ENCODE measurements at regions of chr12 and their contacts with region 1.

Region 1: GRCh38 chr12:114684098-114684869 is at the start of gene TBX3:
- DNase-seq: peak; percentile 97
- H3K4me3 ChIP-seq: peak within 1 kb of the TSS; percentile 52 to 60 (median 55)
- H3K27ac ChIP-seq: peak within 1 kb of the TSS; percentile 78 to 89 (median 84)
- H3K4me1 ChIP-seq: peaks cover 0 to 28% (median 21%) of the 10 kb centered on the region in 4 donors
- H3K27me3 ChIP-seq: peaks cover 22 to 46% (median 31%) of the 10 kb centered on the region in 3 donors
- CTCF ChIP-seq: peak in 3 of 4 experiments; percentile 12 to 53 (median 49)
- EP300 ChIP-seq: no peak
- POLR2A ChIP-seq: peak; percentile 69 to 82
- total RNA-seq, gene TBX3: 6.2 to 9.7 (median 7.6) TPM

Region 2: DNA sequence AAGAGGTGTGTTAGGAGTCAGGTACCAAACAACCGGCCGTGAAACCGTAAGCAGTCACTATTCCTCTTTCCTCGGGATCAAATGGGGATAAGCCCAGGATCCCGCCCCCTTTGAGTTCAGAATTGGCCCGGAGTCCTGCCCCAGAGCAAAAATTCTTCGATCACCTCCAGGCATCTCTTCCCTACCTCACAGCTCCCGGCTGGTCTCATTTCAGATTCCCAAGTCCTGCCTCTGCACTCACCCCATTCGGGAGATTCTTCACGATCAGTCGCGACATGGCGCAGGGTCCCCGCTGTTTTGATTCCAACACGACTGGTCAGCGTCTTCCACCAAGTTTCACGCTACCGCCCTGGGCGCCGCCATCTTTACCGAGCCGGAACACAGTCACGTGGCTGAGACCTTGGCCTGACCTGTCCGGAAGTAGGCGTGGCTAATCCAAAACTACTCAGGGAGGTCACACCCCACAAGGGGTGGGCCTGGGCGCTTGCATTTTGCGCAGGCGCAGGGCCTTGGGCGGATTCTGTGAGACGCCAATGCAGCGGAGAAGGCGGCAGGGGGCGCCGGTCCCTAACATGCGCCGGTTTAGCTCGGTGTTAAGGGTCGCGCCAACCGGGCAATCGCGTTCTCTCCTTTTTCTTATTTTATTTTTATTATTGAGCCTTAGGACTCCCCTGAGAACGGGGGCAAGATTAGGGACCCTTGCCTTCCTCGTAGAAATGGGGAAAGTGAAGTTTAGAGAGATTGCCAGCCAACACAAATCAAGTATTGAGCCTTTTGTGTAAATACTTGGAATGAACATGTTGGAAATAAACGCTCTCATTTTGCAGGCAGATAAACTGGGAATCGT is 718.1 kb before region 1 on chr12 and contains the start of gene RBM19:
- intact Hi-C with region 1: loop called (anchors 5 kb)
- DNase-seq: peak; percentile 98
- H3K4me3 ChIP-seq: peak within 1 kb of the TSS; percentile 65 to 78 (median 70)
- H3K27ac ChIP-seq: peak within 1 kb of the TSS; percentile 30 to 68 (median 56)
- H3K4me1 ChIP-seq: peaks cover 0 to 15% (median 13%) of the 10 kb centered on the region in 4 donors
- H3K27me3 ChIP-seq: no peaks in the 10 kb centered on the region
- CTCF ChIP-seq: peak; percentile 76 to 89 (median 78)
- EP300 ChIP-seq: no peak
- POLR2A ChIP-seq: no peak
- total RNA-seq, gene RBM19: 22.2 to 42.7 (median 26.2) TPM

Region 3: GRCh38 chr12:114744691-114745090 is 60.4 kb after region 1 on chr12:
- intact Hi-C with region 1: loop called (anchors 5 kb)
- DNase-seq: peak; percentile 77
- H3K4me3 ChIP-seq: peak overlapping the region in 2 of 4 donors; percentile 11 to 16
- H3K27ac ChIP-seq: peak overlapping the region in 2 of 4 donors; percentile 25 to 45
- H3K4me1 ChIP-seq: peaks cover 0 to 25% (median 18%) of the 10 kb centered on the region in 4 donors
- H3K27me3 ChIP-seq: no peaks in the 10 kb centered on the region
- CTCF ChIP-seq: no peak
- EP300 ChIP-seq: no peak
- POLR2A ChIP-seq: no peak

Region 4: GRCh38 chr12:115213538-115214016 is 529.3 kb after region 1 on chr12:
- intact Hi-C with region 1: loop called (anchors 5 kb)
- DNase-seq: no peak
- H3K4me3 ChIP-seq: no peak overlapping the region
- H3K27ac ChIP-seq: peak overlapping the region in 1 of 4 donors; percentile 33
- H3K4me1 ChIP-seq: peaks cover 0 to 37% (median 23%) of the 10 kb centered on the region in 4 donors
- H3K27me3 ChIP-seq: no peaks in the 10 kb centered on the region
- CTCF ChIP-seq: no peak
- EP300 ChIP-seq: no peak
- POLR2A ChIP-seq: no peak

Region 5: GRCh38 chr12:115341442-115341841 is 657.2 kb after region 1 on chr12:
- intact Hi-C with region 1: loop called (anchors 5 kb)
- DNase-seq: peak; percentile 95
- H3K4me3 ChIP-seq: no peak overlapping the region
- H3K27ac ChIP-seq: peak overlapping the region; percentile 55 to 76 (median 68)
- H3K4me1 ChIP-seq: peaks cover 0 to 19% (median 16%) of the 10 kb centered on the region in 4 donors
- H3K27me3 ChIP-seq: no peaks in the 10 kb centered on the region
- CTCF ChIP-seq: no peak
- EP300 ChIP-seq: peak; percentile 36 to 95 (median 80)
- POLR2A ChIP-seq: no peak

Region 6: GRCh38 chr12:115752913-115753726 is 1068.8 kb after region 1 on chr12:
- intact Hi-C with region 1: loop called (anchors 5 kb)
- DNase-seq: no peak
- H3K4me3 ChIP-seq: no peak overlapping the region
- H3K27ac ChIP-seq: no peak overlapping the region
- H3K4me1 ChIP-seq: no peaks in the 10 kb centered on the region
- H3K27me3 ChIP-seq: peaks cover 0 to 45% (median 4%) of the 10 kb centered on the region in 3 donors
- CTCF ChIP-seq: peak; percentile 44 to 72 (median 59)
- EP300 ChIP-seq: no peak
- POLR2A ChIP-seq: no peak

Measured in sigmoid colon (tissue), 7 donors.